Right ventricle myocardium inferior (tissue), 1 donor: ENCODE measurements at regions of chr19 and their contacts with region 1.

Region 1: GRCh38 chr19:47190167-47190727 is 40.8 kb downstream of the BBC3 start:
- DNase-seq: peak; percentile 70
- ATAC-seq: peak; percentile 29

Region 2: DNA sequence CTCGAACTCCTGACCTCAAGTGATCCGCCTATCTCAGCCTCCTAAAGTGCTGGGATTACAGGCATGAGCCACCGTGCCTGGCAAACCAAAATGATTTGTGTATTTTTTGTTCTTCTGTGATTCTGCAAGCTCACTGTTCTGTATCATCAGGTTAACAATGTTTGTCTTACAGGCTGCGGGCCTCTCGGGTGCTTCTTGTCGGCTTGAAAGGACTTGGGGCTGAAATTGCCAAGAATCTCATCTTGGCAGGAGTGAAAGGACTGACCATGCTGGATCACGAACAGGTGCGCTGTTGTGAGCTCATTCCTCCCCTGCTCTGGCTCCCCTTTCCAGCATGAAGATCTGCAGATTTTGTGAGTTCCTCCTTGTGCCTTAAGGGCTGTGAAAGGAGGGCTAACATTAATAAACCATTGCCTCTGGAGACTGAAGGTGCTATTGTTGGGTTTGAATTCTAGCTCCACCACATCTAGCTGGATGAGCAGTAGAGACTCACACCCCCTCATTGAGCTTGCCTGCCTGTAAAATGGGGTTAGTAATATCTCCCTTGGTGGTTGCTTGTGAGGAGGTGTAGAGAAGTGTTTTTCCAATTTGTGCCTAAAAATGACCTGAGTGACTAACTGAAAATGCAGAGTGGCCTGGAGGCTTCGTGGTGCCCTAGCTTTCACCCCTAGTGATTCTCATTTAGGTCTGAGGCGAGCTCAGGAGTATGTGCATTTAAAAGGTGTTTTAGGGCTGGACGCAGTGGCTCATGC is 46.7 kb before region 1 on chr19:
- intact Hi-C with region 1: no loop called
- DNase-seq: no peak
- ATAC-seq: no peak

Region 3: DNA sequence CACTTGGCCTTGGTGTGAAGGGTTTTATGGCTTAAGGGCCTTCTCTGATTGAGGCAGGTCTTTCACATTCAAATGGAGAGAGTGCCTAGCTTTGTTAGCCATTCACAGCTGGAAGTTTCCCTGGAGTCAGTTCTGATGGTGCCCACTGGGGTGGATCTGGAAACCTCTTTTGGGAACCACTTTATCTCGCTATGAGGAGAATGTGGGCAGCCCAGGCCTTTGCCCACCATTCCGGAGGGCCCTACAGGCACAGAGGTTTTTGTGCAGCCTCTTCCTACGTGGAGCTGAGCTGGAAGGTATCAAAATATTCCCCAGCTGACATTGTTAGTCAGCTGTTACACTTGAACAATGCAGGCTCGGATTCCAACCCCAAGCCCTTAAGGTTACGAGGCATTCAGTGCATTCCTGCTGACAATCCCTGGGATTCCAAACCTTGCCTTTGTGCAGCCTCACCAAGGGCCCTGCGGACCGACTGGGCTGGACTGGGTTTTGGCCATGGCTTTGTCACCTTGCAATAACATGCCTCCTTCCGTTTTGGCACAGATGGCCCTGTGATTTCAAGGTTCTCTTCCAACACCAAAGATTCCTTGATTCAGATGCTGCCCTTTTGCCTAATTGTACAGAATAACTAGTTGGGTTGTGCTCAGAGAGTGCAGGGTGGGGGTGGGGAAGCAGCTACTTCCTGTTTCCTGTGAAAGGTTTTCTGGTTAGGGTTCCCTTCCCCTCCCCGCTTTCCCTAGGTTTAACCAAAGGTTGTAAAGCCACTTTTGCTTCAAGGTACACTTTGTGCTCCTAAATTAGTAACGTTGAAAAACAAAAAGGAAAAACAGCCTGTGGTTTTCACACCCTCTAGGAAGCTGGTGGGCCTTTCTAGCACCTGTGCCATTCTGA is 32.6 kb before region 1 on chr19:
- intact Hi-C with region 1: loop called (anchors 5 kb)
- DNase-seq: no peak
- ATAC-seq: peak; percentile 55